ENCODE measurements at regions of chr11 and their contacts with region 1.

Region 1: DNA sequence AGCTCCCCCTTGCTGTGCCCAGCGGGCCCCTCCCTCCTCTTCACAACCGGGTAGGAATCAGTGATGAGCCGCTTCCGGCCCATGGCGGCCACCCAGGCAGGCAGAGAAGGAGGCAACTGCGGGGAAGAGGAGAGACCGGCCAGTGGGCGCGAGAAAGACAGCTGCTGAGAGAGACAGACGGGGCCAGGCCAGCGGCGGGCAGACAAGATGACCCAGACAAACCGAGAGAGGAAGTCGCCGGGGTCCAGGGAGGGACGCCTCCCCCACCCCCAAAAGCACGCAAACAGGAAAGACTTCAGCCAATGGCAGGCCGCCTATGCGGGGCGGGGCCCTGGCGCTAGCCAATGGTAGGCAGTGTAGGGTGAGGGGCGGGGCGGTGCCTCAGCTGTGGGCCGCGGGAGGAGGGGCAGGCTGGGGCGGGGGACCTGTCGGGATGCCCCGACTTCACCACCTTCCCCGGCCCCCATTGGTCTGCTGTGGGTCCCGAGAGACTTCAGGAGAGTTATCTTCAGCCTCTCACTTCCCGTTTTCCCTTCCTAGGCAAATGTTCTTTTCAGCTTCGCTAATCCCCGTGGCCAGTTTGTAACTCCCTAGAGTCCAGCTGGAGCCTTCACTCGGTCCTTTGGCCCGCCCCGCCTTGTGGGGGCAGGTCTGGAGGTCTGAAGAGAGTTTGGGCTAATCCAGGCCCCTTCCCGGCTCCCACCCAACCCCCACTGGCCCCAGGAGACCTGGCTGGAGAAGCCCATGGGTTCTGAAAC is at the start of gene POLD4:
- DNase-seq: peak; percentile 100
- total RNA-seq, gene POLD4: 61.6 TPM

Region 2: GRCh38 chr11:67013511-67014045 is 339.9 kb before region 1 on chr11:
- intact Hi-C with region 1: no loop called
- DNase-seq: no peak

Region 3: GRCh38 chr11:67311556-67312082 is 41.9 kb before region 1 on chr11:
- intact Hi-C with region 1: no loop called
- DNase-seq: no peak

Region 4: DNA sequence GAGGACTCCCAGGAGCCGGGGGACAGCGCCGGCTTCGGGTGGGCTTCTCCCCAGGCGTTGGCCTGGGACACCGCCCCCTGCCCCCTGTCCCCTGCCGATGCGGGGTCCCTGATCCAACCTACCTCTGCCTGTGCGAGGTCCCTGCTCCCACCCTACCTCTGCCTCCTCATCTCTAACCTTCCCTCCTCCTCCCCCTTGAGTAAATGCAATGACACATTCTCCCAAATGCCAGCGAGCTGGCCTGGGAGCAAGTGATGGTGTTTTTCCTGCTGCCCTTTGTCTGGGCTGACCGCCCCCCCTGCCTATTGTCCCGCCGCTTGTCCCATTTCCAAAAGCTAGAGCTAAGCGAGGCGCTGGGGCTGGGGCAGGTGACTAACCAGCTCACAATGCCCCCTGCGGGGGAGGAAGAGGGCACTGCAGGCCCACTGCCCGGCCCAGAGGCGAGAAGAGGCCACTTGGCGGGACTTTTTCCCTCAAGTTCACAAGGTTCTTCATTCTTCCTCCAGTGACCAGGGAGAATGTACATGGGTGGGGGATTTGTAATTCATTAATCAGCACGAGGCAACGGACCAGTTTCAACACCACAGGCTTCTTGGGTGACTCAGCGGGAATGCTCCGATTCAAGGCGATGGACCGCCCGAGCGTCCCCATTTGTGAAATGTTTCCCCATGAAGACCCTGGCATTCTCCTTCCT is 20.6 kb after region 1 on chr11:
- intact Hi-C with region 1: loop called (anchors 1 kb)
- DNase-seq: peak; percentile 90

Region 5: GRCh38 chr11:67401495-67402191 is 48.1 kb after region 1 on chr11 and contains the start of gene PPP1CA:
- intact Hi-C with region 1: no loop called
- DNase-seq: peak; percentile 97
- total RNA-seq, gene PPP1CA: 95.1 TPM

Measured in cardiac septum (tissue), 1 donor.